Endothelial cell of umbilical vein (primary cell): ENCODE measurements at regions of chr15 and their contacts with region 1.

Region 1: DNA sequence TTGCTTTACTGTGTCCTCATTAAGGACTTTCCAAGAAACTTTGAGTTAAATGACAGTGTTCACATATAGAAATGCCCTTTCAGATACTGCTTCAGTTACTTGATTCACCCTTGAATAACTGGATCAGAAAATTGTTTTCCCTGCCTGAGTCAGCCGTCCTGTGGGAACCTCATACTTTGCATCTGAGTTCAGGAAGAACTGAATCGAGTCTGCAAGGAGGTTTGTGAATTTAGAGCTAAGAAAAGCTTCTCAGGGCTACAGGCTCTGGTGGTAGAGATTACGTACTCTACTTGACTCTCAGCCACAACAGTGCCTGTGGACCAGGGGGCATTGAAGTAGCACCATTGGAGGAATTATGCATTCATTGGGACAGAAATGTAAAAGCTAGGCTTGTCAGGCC is 252.4 kb upstream of the C2CD4B start:
- DNase-seq: no peak
- H3K4me3 ChIP-seq: no peak overlapping the region
- H3K27ac ChIP-seq: no peak overlapping the region
- H3K4me1 ChIP-seq: no peaks in the 10 kb centered on the region
- H3K27me3 ChIP-seq: no peaks in the 10 kb centered on the region
- CTCF ChIP-seq: no peak
- POLR2A ChIP-seq: no peak

Region 2: GRCh38 chr15:62142731-62143130 is 274.7 kb before region 1 on chr15:
- CTCF ChIA-PET with region 1: no interaction called
- POLR2A ChIA-PET with region 1: no interaction called
- dilution Hi-C with region 1: no loop called
- intact Hi-C with region 1: no loop called
- DNase-seq: no peak
- H3K4me3 ChIP-seq: no peak overlapping the region
- H3K27ac ChIP-seq: no peak overlapping the region
- H3K4me1 ChIP-seq: peaks cover 14% of the 10 kb centered on the region
- H3K27me3 ChIP-seq: no peaks in the 10 kb centered on the region
- CTCF ChIP-seq: no peak
- POLR2A ChIP-seq: no peak

Region 3: GRCh38 chr15:62378772-62379498 is 38.5 kb before region 1 on chr15:
- CTCF ChIA-PET with region 1: no interaction called
- POLR2A ChIA-PET with region 1: interaction called, 11 read pairs
- dilution Hi-C with region 1: no loop called
- intact Hi-C with region 1: no loop called
- DNase-seq: no peak
- H3K4me3 ChIP-seq: no peak overlapping the region
- H3K27ac ChIP-seq: no peak overlapping the region
- H3K4me1 ChIP-seq: no peaks in the 10 kb centered on the region
- H3K27me3 ChIP-seq: no peaks in the 10 kb centered on the region
- CTCF ChIP-seq: no peak
- POLR2A ChIP-seq: no peak

Region 4: DNA sequence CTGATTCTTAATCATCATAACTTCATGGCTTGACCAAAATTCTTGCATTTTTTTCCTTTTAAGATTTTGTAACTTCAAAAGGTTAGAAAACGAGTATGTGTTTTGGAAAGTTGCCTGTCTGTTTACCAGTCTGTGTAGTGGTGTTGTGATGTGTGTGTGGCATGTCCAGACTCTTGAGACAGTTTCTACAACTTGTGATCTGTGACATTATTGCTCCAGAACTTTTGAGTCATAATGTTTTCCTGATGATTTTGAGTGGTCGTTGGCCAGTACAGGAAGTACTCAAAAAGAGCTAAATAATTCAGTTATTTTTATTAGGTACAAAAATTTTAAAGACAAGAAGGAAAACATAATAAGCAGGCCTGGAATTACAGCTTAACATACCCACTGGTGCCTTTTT is 23.4 kb before region 1 on chr15:
- CTCF ChIA-PET with region 1: no interaction called
- POLR2A ChIA-PET with region 1: no interaction called
- dilution Hi-C with region 1: no loop called
- intact Hi-C with region 1: no loop called
- DNase-seq: no peak
- H3K4me3 ChIP-seq: no peak overlapping the region
- H3K27ac ChIP-seq: no peak overlapping the region
- H3K4me1 ChIP-seq: peaks cover 16% of the 10 kb centered on the region
- H3K27me3 ChIP-seq: peaks cover 12 to 14% of the 10 kb centered on the region in 2 experiments
- CTCF ChIP-seq: no peak
- POLR2A ChIP-seq: no peak

Region 5: GRCh38 chr15:62404194-62404985 is 13.0 kb before region 1 on chr15:
- CTCF ChIA-PET with region 1: no interaction called
- POLR2A ChIA-PET with region 1: no interaction called
- dilution Hi-C with region 1: no loop called
- intact Hi-C with region 1: no loop called
- DNase-seq: no peak
- H3K4me3 ChIP-seq: no peak overlapping the region
- H3K27ac ChIP-seq: no peak overlapping the region
- H3K4me1 ChIP-seq: peaks cover 5% of the 10 kb centered on the region
- H3K27me3 ChIP-seq: no peaks in the 10 kb centered on the region
- CTCF ChIP-seq: no peak
- POLR2A ChIP-seq: no peak